ENCODE measurements at regions of chr5 and their contacts with region 1.

Region 1: DNA sequence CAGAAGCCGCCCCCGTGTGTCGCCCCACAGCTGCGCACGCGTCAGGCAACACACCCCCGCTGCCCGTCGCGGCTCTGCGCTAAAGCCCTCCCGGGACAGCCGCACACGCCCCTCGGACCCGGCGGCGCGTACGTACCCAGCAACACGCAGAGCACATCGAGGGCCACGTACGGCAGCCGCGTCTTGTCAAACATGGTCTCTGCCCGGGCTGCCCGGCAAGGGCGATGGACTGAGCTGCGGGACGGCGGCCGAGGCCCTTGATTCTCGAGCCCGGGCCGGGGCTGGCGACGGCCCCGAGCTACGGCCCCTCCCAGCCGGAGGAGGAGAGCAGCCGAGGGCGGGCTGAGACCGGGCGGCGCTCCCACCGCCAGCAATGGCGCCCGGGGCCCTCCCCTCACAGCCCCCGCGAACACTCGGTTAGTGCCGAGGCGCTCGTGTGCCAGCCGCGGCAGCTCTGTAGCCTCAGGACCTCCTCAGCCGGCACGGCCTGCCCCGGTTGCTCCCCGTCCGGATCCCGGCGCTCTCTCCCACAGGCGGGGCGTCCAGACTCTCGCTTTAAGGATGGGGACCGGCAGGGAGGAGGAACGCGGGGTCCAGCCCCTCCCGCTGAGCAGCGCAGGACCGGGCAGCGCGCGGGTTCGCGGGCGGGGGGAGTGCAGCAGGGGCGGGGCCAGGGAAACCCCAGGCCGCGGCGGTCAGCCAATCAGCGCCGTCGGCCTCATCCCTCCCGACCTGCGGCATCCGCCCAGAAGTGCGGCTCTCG is at the start of gene PLPP1:
- DNase-seq: peak; percentile 96
- H3K4me3 Mint-ChIP-seq: peak within 1 kb of the TSS; percentile 91
- H3K27ac Mint-ChIP-seq: peak within 1 kb of the TSS; percentile 86
- H3K4me1 Mint-ChIP-seq: peaks cover 39% of the 10 kb centered on the region
- H3K27me3 Mint-ChIP-seq: no peaks in the 10 kb centered on the region
- total RNA-seq, gene PLPP1: 29.7 and 33.9 TPM in 2 replicates

Region 2: DNA sequence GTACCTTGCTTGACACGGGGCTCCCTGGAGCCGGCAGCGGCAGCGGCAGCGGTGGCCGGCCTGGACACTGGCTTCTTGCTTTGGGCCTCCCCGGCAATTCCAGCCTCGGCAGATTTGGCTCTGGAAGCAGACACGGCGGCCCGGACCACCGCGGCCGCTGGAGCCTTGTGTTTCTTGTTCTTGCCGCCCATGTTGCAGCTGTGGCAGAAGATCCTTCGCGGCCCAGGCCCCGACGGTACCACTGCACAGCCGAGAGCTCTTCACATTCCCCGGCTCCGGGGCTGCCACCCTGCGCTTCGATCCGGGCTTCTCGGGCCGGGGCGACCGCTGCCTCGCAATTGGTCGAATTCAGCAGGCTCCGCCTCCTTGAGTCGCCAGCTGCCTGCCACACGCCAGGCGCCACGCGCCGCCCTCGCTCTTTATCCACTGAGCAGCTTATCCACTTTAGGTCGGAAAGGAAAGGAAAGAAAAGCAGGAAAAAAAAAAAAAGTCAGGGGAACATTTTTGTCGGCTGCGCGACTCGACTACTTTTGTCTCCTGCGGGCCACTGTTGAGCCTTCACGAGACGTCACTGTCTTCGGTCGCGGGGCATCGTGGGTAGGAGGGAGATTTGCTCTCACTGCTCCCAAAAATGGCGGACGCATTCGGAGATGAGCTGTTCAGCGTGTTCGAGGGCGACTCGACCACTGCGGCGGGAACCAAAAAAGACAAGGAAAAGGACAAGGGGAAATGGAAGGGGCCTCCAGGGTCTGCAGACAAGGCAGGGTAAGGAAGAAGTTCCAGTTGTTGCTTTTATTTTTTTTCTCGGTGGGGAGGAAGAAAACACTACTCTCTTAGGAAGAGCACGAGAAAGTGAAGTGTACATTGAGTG is 227.0 kb before region 1 on chr5 and contains the starts of genes DHX29 and MTREX:
- intact Hi-C with region 1: loop called (anchors 2 kb)
- DNase-seq: peak; percentile 97
- H3K4me3 Mint-ChIP-seq: no peak within 1 kb of the TSS
- H3K27ac Mint-ChIP-seq: no peak within 1 kb of the TSS
- H3K4me1 Mint-ChIP-seq: peaks cover 22% of the 10 kb centered on the region
- H3K27me3 Mint-ChIP-seq: no peaks in the 10 kb centered on the region
- total RNA-seq, gene DHX29: 18.0 and 18.2 TPM in 2 replicates
- total RNA-seq, gene MTREX: 123 and 128 TPM in 2 replicates

Region 3: DNA sequence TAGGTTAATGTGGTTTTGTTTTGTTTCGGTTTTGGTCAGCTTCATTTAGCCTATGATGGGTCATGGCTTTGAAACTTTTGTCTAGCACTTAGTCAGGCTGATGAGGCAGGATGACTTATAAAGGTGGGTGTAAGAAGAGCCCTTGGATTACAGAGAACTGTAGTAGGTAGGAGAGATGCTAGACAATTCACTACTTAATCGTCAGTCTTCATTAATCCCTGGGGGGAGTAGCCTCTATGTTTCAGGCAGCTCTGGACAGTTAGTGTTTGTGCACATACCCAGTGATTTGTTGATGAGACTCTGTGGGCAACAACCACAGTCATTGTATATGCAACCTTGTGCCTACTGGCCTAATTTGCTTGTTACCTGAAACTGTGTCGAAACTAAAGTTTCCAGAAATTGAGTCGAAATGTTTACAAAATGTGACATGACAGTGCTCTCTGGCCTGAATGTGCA is 113.5 kb before region 1 on chr5:
- intact Hi-C with region 1: loop called (anchors 5 kb)
- DNase-seq: no peak
- H3K4me3 Mint-ChIP-seq: no peak overlapping the region
- H3K27ac Mint-ChIP-seq: peak overlapping the region; percentile 16
- H3K4me1 Mint-ChIP-seq: peaks cover 17% of the 10 kb centered on the region
- H3K27me3 Mint-ChIP-seq: no peaks in the 10 kb centered on the region

Region 4: GRCh38 chr5:55593115-55593472 is 58.5 kb after region 1 on chr5:
- intact Hi-C with region 1: loop called (anchors 1 kb)
- DNase-seq: no peak
- H3K4me3 Mint-ChIP-seq: no peak overlapping the region
- H3K27ac Mint-ChIP-seq: peak overlapping the region; percentile 38
- H3K4me1 Mint-ChIP-seq: peaks cover 45% of the 10 kb centered on the region
- H3K27me3 Mint-ChIP-seq: no peaks in the 10 kb centered on the region

Region 5: GRCh38 chr5:55657443-55657842 is 122.8 kb after region 1 on chr5:
- intact Hi-C with region 1: no loop called
- DNase-seq: no peak
- H3K4me3 Mint-ChIP-seq: no peak overlapping the region
- H3K27ac Mint-ChIP-seq: no peak overlapping the region
- H3K4me1 Mint-ChIP-seq: peaks cover 2% of the 10 kb centered on the region
- H3K27me3 Mint-ChIP-seq: no peaks in the 10 kb centered on the region

Region 6: GRCh38 chr5:55691265-55692105 is 156.9 kb after region 1 on chr5:
- intact Hi-C with region 1: loop called (anchors 5 kb)
- DNase-seq: no peak
- H3K4me3 Mint-ChIP-seq: no peak overlapping the region
- H3K27ac Mint-ChIP-seq: no peak overlapping the region
- H3K4me1 Mint-ChIP-seq: peaks cover 12% of the 10 kb centered on the region
- H3K27me3 Mint-ChIP-seq: no peaks in the 10 kb centered on the region